CD8-positive, alpha-beta memory T cell (primary cell): ENCODE measurements at regions of chr15 and their contacts with region 1.

Region 1: GRCh38 chr15:81480645-81481053 is 106.6 kb upstream of the TMC3 start:
- DNase-seq: peak in 2 of 5 donors; percentile 23 to 46
- H3K4me3 ChIP-seq: no peak overlapping the region
- H3K4me3 Mint-ChIP-seq: peak overlapping the region in 3 of 7 donors; percentile 36 to 58 (median 52)
- H3K27ac ChIP-seq: no peak overlapping the region
- H3K27ac Mint-ChIP-seq: no peak overlapping the region
- H3K4me1 ChIP-seq: no peaks in the 10 kb centered on the region
- H3K4me1 Mint-ChIP-seq: no peaks in the 10 kb centered on the region
- H3K27me3 ChIP-seq: no peaks in the 10 kb centered on the region
- H3K27me3 Mint-ChIP-seq: peaks cover 3 to 16% of the 10 kb centered on the region in 2 donors

Region 2: DNA sequence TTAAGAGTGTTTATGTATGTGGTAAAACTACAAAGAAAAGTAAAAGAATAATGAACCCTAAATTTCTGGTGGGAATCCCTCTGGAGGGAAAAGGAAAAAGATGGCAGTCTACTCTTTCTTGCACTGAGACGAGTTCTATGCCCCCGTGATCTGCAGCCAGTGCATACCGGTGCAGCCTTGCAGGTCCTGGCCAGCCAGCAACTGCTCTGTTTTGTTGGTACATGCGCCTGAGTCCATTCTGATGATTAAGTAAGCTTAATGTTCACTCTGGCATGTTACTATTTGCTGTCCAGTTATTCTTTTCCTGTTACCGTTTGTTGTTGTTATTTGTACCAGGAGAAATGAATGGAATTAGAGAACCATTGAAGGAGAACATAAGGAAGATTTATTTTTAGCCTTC is 11.5 kb before region 1 on chr15:
- CTCF ChIA-PET with region 1: interaction called, 11 read pairs
- POLR2A ChIA-PET with region 1: no interaction called
- DNase-seq: no peak
- H3K4me3 ChIP-seq: no peak overlapping the region
- H3K4me3 Mint-ChIP-seq: no peak overlapping the region
- H3K27ac ChIP-seq: no peak overlapping the region
- H3K27ac Mint-ChIP-seq: no peak overlapping the region
- H3K4me1 ChIP-seq: no peaks in the 10 kb centered on the region
- H3K4me1 Mint-ChIP-seq: no peaks in the 10 kb centered on the region
- H3K27me3 ChIP-seq: no peaks in the 10 kb centered on the region
- H3K27me3 Mint-ChIP-seq: peaks cover 40 to 69% of the 10 kb centered on the region in 2 donors

Region 3: GRCh38 chr15:81575436-81576123 is 94.9 kb after region 1 on chr15:
- CTCF ChIA-PET with region 1: no interaction called
- POLR2A ChIA-PET with region 1: no interaction called
- DNase-seq: no peak
- H3K4me3 ChIP-seq: no peak overlapping the region
- H3K4me3 Mint-ChIP-seq: no peak overlapping the region
- H3K27ac ChIP-seq: no peak overlapping the region
- H3K27ac Mint-ChIP-seq: no peak overlapping the region
- H3K4me1 ChIP-seq: no peaks in the 10 kb centered on the region
- H3K4me1 Mint-ChIP-seq: no peaks in the 10 kb centered on the region
- H3K27me3 ChIP-seq: no peaks in the 10 kb centered on the region
- H3K27me3 Mint-ChIP-seq: peaks cover 5 to 32% of the 10 kb centered on the region in 2 donors